ENCODE measurements at regions of chr17 and their contacts with region 1.

Region 1: DNA sequence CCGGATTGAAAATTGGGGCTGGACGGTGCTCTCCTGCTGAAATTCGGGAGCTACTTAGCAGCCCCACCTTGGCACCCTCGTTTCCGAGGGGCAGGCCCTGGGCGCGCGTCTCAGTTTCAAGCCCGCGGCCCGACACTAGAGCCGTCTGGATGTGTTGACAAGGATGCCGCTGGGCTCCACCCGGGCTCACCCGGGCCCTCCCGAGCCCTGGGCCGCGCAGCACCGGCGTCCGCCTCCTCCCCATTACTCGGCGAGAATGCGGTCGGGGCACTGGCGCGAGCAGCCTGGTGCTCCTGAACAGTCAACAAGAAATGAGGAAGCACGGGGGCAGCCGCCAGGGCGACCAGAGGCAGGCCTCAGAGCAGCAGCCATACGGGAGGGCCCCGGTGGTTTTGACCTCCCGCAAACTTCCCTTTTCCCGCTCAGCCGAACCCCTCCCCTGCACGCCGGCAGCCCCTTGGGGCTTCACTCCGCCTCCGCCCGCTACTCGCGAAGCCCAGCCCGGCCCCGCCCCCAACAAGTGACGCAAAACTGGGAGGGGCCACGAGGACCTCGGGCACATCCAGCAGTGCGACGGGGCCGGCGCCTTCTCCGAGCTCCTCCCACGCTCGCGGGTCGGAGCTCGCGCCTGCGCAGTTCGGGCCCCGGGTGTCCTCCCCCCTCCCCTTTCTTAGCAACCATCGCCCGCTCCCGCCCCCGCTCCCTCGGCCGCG is 447 bp upstream of the SEC14L1 start:
- DNase-seq: peak; percentile 96
- ATAC-seq: peak; percentile 91
- H3K4me3 ChIP-seq: peak overlapping the region; percentile 50 to 84 (median 78)
- H3K27ac ChIP-seq: peak overlapping the region; percentile 89
- H3K4me1 ChIP-seq: peaks cover 57% of the 10 kb centered on the region
- H3K27me3 ChIP-seq: no peaks in the 10 kb centered on the region; a peak in 1 of 5 replicates
- CTCF ChIP-seq: no peak
- EP300 ChIP-seq: peak; percentile 33 to 45; a peak in 2 of 4 replicates
- POLR2A ChIP-seq: peak; percentile 92 to 96
- RAD21 ChIP-seq: peak; percentile 76

Region 2: DNA sequence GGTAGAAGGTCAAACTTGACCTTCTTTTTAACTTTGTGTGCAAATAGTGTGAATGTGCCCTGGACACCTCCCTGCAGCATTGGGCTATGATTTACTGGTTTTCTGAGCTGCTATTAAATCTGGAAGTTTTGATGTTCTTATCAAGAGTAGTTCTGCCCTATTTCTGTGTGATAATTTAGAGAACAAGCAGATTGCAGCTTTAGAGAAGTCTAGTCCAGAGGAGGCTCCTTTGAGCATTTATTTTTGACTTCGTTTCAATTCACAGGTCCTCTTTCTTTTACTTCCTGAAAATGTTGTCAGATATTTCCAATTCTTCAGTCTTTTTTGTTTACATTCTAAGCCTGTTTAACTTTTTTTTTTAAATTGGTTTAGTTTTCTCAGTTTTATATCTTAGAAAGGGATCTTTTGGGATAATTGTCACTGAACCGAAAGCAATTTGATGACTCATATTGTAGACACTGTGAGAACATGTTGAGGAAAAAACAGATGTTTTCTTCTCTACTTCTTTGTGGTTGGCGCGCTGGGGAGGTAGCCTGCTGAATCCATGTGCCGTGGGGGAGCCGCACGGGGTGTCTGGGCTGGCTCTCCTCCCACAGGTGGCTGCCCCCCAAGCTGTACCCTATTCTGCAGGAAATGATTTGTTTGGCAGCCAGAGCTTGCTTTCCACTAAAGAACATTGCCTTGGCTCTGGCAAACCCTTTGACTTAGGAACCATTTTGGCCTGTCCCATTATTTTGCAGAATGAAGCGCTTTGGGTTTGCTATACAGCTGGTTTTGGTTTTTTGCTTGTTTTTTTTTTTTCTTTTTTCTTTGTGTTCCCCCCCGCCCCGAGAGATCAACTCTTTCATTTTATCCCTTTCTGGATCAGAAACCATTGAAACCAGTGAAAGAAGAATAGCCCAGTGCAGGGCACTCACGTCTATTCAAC is 349.0 kb before region 1 on chr17:
- CTCF ChIA-PET with region 1: no interaction called
- POLR2A ChIA-PET with region 1: no interaction called
- in situ Hi-C with region 1: no loop called
- intact Hi-C with region 1: no loop called
- DNase-seq: peak; percentile 39
- ATAC-seq: no peak
- H3K4me3 ChIP-seq: no peak overlapping the region
- H3K27ac ChIP-seq: no peak overlapping the region
- H3K4me1 ChIP-seq: peaks cover 32% of the 10 kb centered on the region
- H3K27me3 ChIP-seq: no peaks in the 10 kb centered on the region
- CTCF ChIP-seq: no peak
- EP300 ChIP-seq: no peak
- POLR2A ChIP-seq: no peak
- RAD21 ChIP-seq: no peak

Region 3: GRCh38 chr17:77101521-77102410 is 38.6 kb before region 1 on chr17:
- CTCF ChIA-PET with region 1: no interaction called
- POLR2A ChIA-PET with region 1: interaction called, 15 read pairs
- in situ Hi-C with region 1: no loop called
- intact Hi-C with region 1: no loop called
- DNase-seq: peak; percentile 88
- ATAC-seq: peak; percentile 89
- H3K4me3 ChIP-seq: peak overlapping the region in 2 of 3 experiments; percentile 19 to 44; a peak in 1 of 6 replicates
- H3K27ac ChIP-seq: peak overlapping the region; percentile 68
- H3K4me1 ChIP-seq: peaks cover 84% of the 10 kb centered on the region
- H3K27me3 ChIP-seq: no peaks in the 10 kb centered on the region
- CTCF ChIP-seq: no peak
- EP300 ChIP-seq: peak in 1 of 2 experiments; percentile 76; a peak in 2 of 4 replicates
- POLR2A ChIP-seq: peak in 1 of 2 experiments; percentile 48; a peak in 1 of 4 replicates
- RAD21 ChIP-seq: no peak

Region 4: DNA sequence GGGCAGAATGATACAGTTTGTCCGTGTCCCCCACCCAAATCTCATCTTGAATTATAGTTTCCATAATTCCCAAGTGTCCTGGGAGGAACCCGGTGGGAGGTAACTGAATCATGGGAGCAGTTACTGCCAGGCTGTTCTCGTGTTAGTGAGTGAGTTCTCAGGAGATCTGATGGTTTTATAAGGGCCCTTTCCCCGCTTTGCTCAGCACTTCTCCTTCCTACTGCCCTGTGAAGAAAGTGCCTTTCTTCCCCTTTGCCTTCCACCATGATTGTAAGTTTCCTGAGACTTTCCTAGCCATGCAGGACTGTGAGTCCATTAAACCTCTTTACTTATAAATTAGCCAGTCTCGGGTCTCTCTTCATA is 28.4 kb before region 1 on chr17:
- CTCF ChIA-PET with region 1: no interaction called
- POLR2A ChIA-PET with region 1: interaction called, 10 read pairs
- in situ Hi-C with region 1: no loop called
- intact Hi-C with region 1: no loop called
- DNase-seq: no peak
- ATAC-seq: peak; percentile 10; the same call in 1 of the 3 replicates
- H3K4me3 ChIP-seq: no peak overlapping the region
- H3K27ac ChIP-seq: peak overlapping the region; percentile 62
- H3K4me1 ChIP-seq: peaks cover 85% of the 10 kb centered on the region
- H3K27me3 ChIP-seq: no peaks in the 10 kb centered on the region
- CTCF ChIP-seq: no peak
- EP300 ChIP-seq: no peak
- POLR2A ChIP-seq: no peak
- RAD21 ChIP-seq: no peak

Region 5: DNA sequence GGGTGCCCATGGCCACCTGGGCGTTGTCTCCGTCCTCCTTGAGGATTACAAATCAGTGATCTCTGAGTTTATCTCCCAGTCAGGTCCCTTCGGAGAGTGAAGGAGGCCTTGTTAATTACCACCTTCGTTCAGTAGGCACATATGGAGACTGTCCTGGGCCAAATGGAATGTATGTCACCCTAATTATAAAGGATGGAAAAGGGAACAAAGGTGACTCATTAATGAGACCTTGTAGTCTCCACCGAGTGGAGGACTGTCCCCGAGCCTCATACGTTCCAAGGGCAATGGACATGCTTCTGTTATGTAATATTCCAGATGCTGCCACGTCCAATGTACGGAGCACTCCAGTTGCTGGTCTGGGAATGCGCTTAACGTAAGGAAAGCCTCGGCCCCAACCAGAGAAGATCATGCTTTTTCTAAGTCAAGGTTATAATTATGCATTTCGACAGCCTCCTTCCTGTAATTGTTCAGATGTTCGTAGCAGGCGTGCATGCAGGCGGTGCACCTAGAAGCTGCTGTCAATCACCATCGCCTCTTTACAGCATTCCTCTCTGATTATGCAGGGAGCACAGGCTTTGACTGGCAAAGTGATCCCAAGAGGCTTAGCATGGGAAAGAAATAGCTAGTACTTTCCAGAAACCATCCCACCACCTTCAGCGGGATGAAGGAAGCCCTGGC is 21.9 kb before region 1 on chr17:
- CTCF ChIA-PET with region 1: no interaction called
- POLR2A ChIA-PET with region 1: interaction called, 38 read pairs
- in situ Hi-C with region 1: no loop called
- intact Hi-C with region 1: no loop called
- DNase-seq: no peak
- ATAC-seq: no peak
- H3K4me3 ChIP-seq: no peak overlapping the region
- H3K27ac ChIP-seq: no peak overlapping the region
- H3K4me1 ChIP-seq: peaks cover 88% of the 10 kb centered on the region
- H3K27me3 ChIP-seq: no peaks in the 10 kb centered on the region
- CTCF ChIP-seq: no peak
- EP300 ChIP-seq: no peak
- POLR2A ChIP-seq: no peak
- RAD21 ChIP-seq: no peak

Region 6: DNA sequence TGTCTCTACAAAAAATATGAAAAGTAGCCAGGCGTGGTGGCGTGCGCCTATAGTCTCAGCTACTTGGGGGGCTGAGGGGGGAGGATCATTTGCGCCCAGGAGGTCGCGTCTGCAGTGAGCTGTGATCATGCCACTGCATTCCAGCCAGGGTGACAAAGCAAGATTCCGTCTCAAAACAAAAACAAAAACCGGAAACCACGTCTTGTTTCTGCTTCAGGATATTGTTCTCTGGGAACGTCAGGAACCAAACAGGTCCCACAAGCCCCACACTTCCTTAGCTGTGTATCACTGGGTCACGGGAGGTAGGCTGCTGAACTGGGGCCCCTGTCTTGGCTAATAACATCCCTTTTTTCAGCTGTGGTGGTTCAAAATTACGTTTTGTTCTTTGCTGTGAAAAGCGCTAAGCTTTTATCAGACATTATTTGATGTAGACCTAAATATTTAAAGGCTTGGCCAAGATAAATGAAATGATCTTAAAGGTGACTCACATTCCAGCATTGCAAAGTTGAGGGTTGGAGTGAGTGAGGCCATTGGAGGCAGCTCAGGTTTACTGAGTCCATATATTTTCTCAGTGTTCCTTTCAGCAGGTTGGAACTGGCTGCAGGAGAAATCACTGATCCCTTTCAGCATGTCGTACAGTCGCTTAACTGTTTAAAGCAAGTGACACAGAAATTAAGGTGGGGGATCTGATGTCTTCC is 16.0 kb before region 1 on chr17:
- CTCF ChIA-PET with region 1: no interaction called
- POLR2A ChIA-PET with region 1: interaction called, 38 read pairs
- in situ Hi-C with region 1: no loop called
- intact Hi-C with region 1: no loop called
- DNase-seq: no peak
- ATAC-seq: no peak
- H3K4me3 ChIP-seq: no peak overlapping the region
- H3K27ac ChIP-seq: no peak overlapping the region
- H3K4me1 ChIP-seq: peaks cover 59% of the 10 kb centered on the region
- H3K27me3 ChIP-seq: no peaks in the 10 kb centered on the region
- CTCF ChIP-seq: no peak
- EP300 ChIP-seq: no peak
- POLR2A ChIP-seq: no peak
- RAD21 ChIP-seq: no peak